Gastrocnemius medialis (tissue), 4 donors: ENCODE measurements at regions of chr1 and their contacts with region 1.

Region 1: DNA sequence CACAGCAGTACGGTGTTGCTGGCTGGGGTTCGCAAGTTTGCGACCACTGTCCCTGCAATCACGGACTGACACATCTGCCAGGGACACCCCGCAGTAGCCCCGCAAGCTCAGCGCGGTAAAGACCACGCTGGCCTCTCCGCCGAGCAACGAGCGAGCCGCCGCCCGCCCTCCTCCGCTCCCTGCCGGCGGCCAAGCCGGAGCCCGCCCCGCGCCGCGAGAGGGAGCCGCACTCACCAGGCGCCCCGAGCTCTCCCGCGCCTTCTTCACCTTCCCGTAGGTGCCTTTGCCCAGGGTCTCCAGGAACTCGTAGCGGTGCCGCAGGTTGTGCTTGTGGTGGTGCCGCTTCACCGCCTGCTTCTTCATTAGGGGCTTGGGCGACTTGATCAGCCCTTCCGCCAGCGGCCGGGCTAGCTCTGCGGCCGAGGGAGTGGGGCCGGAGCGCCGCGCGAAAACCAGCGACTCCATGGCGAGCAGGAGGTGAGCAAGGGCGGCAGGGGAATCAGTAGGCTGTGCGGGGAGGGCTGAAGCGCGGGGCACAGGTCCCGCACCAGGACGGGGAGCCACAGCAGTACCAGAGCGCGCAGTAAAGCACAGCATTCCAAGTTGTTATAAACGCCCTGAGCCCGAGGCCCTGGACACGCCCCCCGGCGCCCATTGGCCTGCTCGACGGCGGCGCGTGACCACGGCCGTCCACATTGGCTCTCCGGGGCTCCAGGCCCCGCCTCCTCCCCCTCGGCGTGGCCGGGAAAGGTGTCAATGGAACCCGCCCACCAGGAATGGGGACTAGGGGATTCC is at the start of gene NUAK2:
- DNase-seq: peak; percentile 83 to 89
- ATAC-seq: peak; percentile 76 to 84
- H3K4me3 ChIP-seq: peak within 1 kb of the TSS; percentile 77 to 98 (median 92)
- H3K27ac ChIP-seq: peak within 1 kb of the TSS; percentile 80 to 93 (median 88)
- H3K4me1 ChIP-seq: peaks cover 41 to 45% of the 10 kb centered on the region in 2 donors
- H3K27me3 ChIP-seq: no peaks in the 10 kb centered on the region
- CTCF ChIP-seq: peak in 3 of 5 experiments; percentile 10 to 47 (median 28)
- POLR2A ChIP-seq: peak; percentile 64 to 87
- total RNA-seq, gene NUAK2: 0.42 to 1.9 (median 0.58) TPM

Region 2: GRCh38 chr1:205273551-205273982 is 47.8 kb before region 1 on chr1:
- in situ Hi-C with region 1: loop called in 3 of 4 experiments (anchors 5 kb)
- intact Hi-C with region 1: loop called (anchors 1 kb)
- DNase-seq: peak; percentile 77 to 79
- ATAC-seq: peak; percentile 62 to 70
- H3K4me3 ChIP-seq: no peak overlapping the region
- H3K27ac ChIP-seq: no peak overlapping the region
- H3K4me1 ChIP-seq: peaks cover 17 to 27% of the 10 kb centered on the region in 2 donors
- H3K27me3 ChIP-seq: no peaks in the 10 kb centered on the region
- CTCF ChIP-seq: peak; percentile 96 to 100 (median 98)
- POLR2A ChIP-seq: no peak

Region 3: GRCh38 chr1:205284343-205285144 is 36.8 kb before region 1 on chr1:
- in situ Hi-C with region 1: loop called in 3 of 4 experiments (anchors 5 kb)
- intact Hi-C with region 1: no loop called
- DNase-seq: peak; percentile 91 to 96
- ATAC-seq: peak; percentile 88 to 93
- H3K4me3 ChIP-seq: no peak overlapping the region
- H3K27ac ChIP-seq: peak overlapping the region; percentile 65 to 80 (median 74)
- H3K4me1 ChIP-seq: peaks cover 6 to 15% of the 10 kb centered on the region in 2 donors
- H3K27me3 ChIP-seq: no peaks in the 10 kb centered on the region
- CTCF ChIP-seq: no peak
- POLR2A ChIP-seq: no peak